Cardiac septum (tissue), 1 donor: ENCODE measurements at regions of chr16 and their contacts with region 1.

Region 1: GRCh38 chr16:54193665-54194333 is 92.8 kb downstream of the IRX3 start:
- DNase-seq: peak; percentile 88

Region 2: DNA sequence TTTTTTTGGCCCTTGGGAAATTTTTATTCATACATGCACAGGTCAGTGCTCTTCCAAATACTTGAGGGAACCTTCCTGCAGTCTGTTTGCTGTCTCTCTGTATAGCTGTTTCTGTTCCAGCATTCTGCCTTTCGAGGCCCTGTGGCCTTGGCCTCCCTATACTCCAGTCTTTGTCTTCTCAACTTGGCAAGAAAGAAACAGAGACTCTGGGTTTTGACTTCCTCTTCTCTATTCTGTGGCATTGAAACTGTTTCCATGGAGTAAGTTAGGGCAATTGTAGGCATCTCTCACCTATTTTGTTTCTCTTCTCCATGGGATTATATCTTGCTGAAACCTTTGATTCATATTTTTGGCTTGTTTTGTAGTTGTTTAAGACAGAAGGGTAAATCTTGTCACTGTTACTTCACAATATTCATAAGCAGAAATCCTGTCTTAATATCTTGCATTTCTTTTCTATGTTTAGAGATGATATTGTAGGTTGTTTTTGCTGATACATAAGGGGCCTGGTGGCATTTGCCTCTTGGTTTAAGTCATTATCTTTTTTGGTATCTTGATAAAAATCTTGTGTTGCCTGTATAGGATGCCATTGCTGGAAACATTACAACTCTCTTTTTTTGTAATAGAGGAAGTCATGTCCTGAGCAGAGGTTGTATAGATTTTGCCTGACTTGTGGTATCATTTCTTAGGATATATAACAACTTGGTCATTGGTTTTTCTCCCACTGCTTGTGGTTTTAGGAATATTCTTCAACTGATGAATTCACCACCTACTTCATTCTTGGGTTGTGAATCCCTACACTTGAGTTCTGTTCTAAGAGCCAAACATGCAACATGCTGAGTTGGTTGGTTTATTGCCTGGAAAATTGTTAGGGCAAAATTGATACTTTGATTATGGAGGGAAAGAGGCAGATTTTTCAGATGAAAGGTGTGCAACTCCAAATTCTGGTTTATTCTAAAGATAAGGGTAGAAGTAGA is 321.3 kb before region 1 on chr16:
- intact Hi-C with region 1: no loop called
- DNase-seq: no peak

Region 3: DNA sequence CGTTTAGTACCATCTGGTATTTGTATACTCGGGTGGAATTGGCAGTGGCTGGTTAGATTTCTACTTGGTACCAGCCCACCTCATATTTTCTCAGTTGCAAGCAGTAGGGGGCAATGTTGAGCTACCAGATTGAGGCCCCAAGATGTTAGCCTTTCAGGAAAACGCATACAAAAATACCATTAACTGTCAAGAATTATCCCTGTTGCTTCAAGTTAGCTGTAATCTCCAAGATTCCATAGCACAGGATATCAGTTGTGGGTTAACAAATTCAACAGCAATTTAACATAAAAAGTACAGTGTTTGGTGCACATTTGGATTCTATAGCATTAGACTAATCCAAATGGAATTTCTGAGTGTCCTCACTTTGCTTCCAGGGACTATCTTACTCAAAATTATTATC is 301.6 kb before region 1 on chr16:
- intact Hi-C with region 1: loop called (anchors 5 kb)
- DNase-seq: no peak